HepG2 (cell line): ENCODE measurements at regions of chr17 and their contacts with region 1.

Region 1: GRCh38 chr17:27455914-27456680 is at the start of gene KSR1:
- DNase-seq: peak; percentile 60
- ATAC-seq: peak; percentile 80
- H3K4me3 ChIP-seq: peak within 1 kb of the TSS; percentile 83 to 87 (median 84)
- H3K27ac ChIP-seq: peak within 1 kb of the TSS; percentile 82
- H3K4me1 ChIP-seq: peaks cover 40% of the 10 kb centered on the region
- H3K27me3 ChIP-seq: peaks cover 2 to 21% of the 10 kb centered on the region in 2 experiments; a peak in 3 of 5 replicates
- CTCF ChIP-seq: peak; percentile 77
- EP300 ChIP-seq: no peak
- POLR2A ChIP-seq: peak; percentile 43 to 76; a peak in 2 of 4 replicates
- RAD21 ChIP-seq: peak; percentile 71
- total RNA-seq, gene KSR1: 8.0 and 10.1 TPM in 2 replicates

Region 2: DNA sequence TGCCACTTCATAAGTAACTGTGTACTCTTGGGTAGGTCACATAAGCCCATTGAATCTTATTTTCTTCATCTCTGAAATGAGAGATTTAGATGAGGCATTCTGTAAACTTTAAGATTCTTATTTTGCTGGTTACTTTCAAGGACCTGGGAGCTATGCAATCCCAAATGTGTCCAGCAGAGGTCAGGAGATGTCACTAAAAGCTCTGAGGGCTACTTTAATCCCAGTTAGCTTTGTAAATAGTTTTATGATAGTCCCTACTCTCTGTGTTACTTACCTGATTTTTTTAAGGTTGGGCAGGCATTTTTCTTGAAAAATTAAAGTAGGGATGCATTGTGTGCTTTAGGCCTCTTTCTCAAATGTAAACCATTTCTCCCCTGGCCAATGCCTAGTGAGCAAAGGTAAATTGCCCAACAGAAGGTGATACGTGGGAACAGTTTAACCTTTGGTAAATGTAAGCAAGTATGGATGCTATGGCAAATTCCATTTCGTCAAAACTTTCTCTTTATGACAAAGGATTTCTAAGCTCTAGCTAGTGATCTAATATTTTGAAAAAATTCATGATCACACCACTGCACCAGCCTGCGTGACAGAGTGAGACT is 219.3 kb before region 1 on chr17:
- CTCF ChIA-PET with region 1: interaction called, 3 read pairs
- POLR2A ChIA-PET with region 1: no interaction called
- in situ Hi-C with region 1: loop called (anchors 10 kb)
- intact Hi-C with region 1: loop called (anchors 5 kb)
- DNase-seq: peak; percentile 63
- ATAC-seq: peak; percentile 60; the same call in 2 of the 3 replicates
- H3K4me3 ChIP-seq: no peak overlapping the region
- H3K27ac ChIP-seq: no peak overlapping the region
- H3K4me1 ChIP-seq: peaks cover 19% of the 10 kb centered on the region
- H3K27me3 ChIP-seq: peaks cover 2 to 24% of the 10 kb centered on the region in 2 experiments; a peak in 3 of 5 replicates
- CTCF ChIP-seq: peak; percentile 74
- EP300 ChIP-seq: no peak
- POLR2A ChIP-seq: no peak
- RAD21 ChIP-seq: peak; percentile 66

Region 3: DNA sequence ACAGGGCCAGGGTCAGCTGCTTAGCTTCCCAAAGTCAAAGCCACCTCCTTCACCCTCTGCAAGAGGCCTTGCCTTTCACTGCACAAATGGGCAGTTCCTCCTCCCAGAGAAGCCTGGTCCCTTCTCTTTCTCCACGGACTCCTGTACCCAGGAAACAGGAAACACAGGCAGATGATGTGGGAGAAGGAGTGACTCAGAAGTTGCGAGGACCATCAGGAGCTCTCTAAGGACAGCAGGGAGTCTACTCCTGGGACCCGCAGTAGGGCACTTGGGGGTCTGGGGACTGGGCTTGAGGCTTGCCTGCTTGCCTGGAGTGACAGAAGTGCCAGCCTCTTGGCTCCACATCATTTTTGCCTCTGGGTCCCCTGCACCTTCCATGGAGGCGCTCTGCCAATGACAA is 47.2 kb before region 1 on chr17:
- CTCF ChIA-PET with region 1: no interaction called
- POLR2A ChIA-PET with region 1: no interaction called
- in situ Hi-C with region 1: no loop called
- intact Hi-C with region 1: no loop called
- DNase-seq: no peak
- ATAC-seq: no peak
- H3K4me3 ChIP-seq: no peak overlapping the region
- H3K27ac ChIP-seq: no peak overlapping the region
- H3K4me1 ChIP-seq: peaks cover 15% of the 10 kb centered on the region
- H3K27me3 ChIP-seq: peaks cover 1 to 12% of the 10 kb centered on the region in 2 experiments; a peak in 3 of 5 replicates
- CTCF ChIP-seq: no peak
- EP300 ChIP-seq: no peak
- POLR2A ChIP-seq: no peak
- RAD21 ChIP-seq: no peak

Region 4: GRCh38 chr17:27442702-27443101 is 13.4 kb before region 1 on chr17:
- CTCF ChIA-PET with region 1: no interaction called
- POLR2A ChIA-PET with region 1: no interaction called
- in situ Hi-C with region 1: no loop called
- intact Hi-C with region 1: no loop called
- DNase-seq: no peak
- ATAC-seq: no peak
- H3K4me3 ChIP-seq: no peak overlapping the region
- H3K27ac ChIP-seq: no peak overlapping the region
- H3K4me1 ChIP-seq: no peaks in the 10 kb centered on the region
- H3K27me3 ChIP-seq: peaks cover 0 to 14% of the 10 kb centered on the region in 2 experiments; a peak in 1 of 5 replicates
- CTCF ChIP-seq: no peak
- EP300 ChIP-seq: no peak
- POLR2A ChIP-seq: no peak
- RAD21 ChIP-seq: no peak

Region 5: GRCh38 chr17:27569884-27570577 is 113.9 kb after region 1 on chr17:
- CTCF ChIA-PET with region 1: interaction called, 3 read pairs
- POLR2A ChIA-PET with region 1: interaction called, 3 read pairs
- in situ Hi-C with region 1: no loop called
- intact Hi-C with region 1: loop called (anchors 2 kb)
- DNase-seq: peak; percentile 87
- ATAC-seq: peak; percentile 87
- H3K4me3 ChIP-seq: peak overlapping the region in 1 of 3 experiments; percentile 30; a peak in 2 of 6 replicates
- H3K27ac ChIP-seq: peak overlapping the region; percentile 35
- H3K4me1 ChIP-seq: peaks cover 55% of the 10 kb centered on the region
- H3K27me3 ChIP-seq: no peaks in the 10 kb centered on the region
- CTCF ChIP-seq: no peak; the same call in 1 of the 2 replicates
- EP300 ChIP-seq: peak; percentile 27 to 66; a peak in 2 of 4 replicates
- POLR2A ChIP-seq: no peak
- RAD21 ChIP-seq: no peak

Region 6: GRCh38 chr17:27666831-27667560 is 210.9 kb after region 1 on chr17:
- CTCF ChIA-PET with region 1: no interaction called
- POLR2A ChIA-PET with region 1: no interaction called
- in situ Hi-C with region 1: no loop called
- intact Hi-C with region 1: no loop called
- DNase-seq: no peak
- ATAC-seq: no peak
- H3K4me3 ChIP-seq: no peak overlapping the region
- H3K27ac ChIP-seq: no peak overlapping the region
- H3K4me1 ChIP-seq: no peaks in the 10 kb centered on the region
- H3K27me3 ChIP-seq: peaks cover 3 to 11% of the 10 kb centered on the region in 2 experiments; a peak in 3 of 5 replicates
- CTCF ChIP-seq: no peak
- EP300 ChIP-seq: no peak
- POLR2A ChIP-seq: no peak
- RAD21 ChIP-seq: no peak